AG04449 (cell line): ENCODE measurements at regions of chr22 and their contacts with region 1.

Region 1: GRCh38 chr22:39520054-39520891 is at the start of gene ATF4:
- DNase-seq: peak; percentile 98
- H3K4me3 ChIP-seq: peak within 1 kb of the TSS; percentile 94
- CTCF ChIP-seq: no peak

Region 2: DNA sequence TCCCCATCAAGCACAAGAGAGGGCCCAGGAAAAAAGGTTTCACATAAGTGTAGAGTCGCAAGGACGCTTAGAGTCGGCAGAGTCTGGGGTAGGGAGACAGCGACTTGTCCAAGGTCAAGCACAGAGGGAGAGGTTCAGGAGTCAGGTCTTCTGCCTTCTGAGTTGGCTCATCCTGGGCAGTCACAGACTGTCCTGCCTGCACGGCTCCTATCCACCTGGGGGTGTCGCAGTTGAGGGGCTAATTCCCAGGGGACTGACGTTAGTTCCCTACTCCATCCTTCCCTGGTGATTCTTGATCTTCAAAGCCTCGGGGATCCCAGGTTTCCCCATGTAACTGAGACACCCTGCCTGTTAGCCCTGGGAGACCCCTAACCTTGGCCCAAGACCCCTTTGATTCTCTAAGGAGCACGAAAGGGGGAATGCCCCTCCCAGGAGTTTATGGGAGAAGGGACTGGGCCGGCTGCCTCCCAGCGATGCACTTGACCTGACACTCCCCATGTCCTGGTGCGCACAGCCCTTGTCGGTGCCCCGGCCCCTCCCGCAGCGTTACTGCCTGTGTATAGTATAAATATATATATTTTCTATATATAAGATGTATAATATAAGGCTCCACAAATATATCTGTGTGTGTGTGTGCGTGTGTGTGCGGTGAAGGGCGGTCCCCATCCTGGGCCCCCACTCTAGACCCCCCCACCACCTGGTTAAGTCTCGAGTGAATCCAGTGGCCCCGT is 135.4 kb before region 1 on chr22:
- CTCF ChIA-PET with region 1: no interaction called
- POLR2A ChIA-PET with region 1: no interaction called
- DNase-seq: no peak
- H3K4me3 ChIP-seq: no peak overlapping the region
- CTCF ChIP-seq: peak; percentile 19

Region 3: DNA sequence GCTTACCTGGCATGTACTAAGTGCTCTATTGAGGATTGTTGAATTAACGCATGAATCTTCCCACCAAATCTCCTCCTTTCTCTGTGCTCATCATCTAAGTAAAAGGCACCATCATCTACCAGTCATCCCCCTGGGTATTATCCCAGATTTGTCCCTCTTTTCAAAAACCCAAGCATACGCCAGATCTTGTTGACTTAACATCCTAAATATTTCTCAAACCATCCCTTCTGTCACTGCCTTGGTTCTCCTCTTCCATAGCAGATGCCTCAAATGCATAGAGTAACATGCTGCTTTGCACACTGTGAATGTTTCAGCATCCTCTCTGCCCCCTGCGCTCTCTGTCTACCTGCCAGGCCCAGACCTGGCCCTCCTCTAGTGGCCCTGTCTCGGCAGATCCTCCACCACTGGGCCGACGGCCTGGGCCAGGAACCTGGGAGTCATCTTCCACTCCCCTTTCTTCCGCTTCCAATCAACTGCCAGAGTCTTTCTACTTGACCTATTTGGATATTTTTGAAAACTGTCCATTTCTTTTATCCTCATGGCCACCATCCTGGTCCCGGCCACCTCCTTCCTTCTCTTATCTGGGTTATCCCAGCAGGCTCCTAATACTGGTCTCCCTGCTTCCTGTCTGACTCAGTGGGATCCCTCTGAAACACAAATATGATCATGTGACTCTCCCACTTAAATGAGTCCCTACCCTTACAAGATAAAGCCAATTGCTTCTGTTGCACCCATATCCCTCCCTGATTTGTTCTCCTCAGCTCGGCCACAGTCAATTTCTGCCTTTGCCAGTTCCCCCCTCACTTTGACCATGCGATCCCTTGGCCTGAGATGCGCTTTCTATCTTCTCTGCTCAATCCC is 124.1 kb before region 1 on chr22:
- CTCF ChIA-PET with region 1: interaction called, 15 read pairs
- POLR2A ChIA-PET with region 1: interaction called, 10 read pairs
- DNase-seq: no peak
- H3K4me3 ChIP-seq: no peak overlapping the region
- CTCF ChIP-seq: no peak

Region 4: GRCh38 chr22:39502109-39502788 is 18.0 kb before region 1 on chr22 and contains the start of gene MIEF1:
- CTCF ChIA-PET with region 1: interaction called, 222 read pairs
- POLR2A ChIA-PET with region 1: interaction called, 16 read pairs
- DNase-seq: peak; percentile 63
- H3K4me3 ChIP-seq: peak within 1 kb of the TSS; percentile 75
- CTCF ChIP-seq: peak; percentile 18

Region 5: DNA sequence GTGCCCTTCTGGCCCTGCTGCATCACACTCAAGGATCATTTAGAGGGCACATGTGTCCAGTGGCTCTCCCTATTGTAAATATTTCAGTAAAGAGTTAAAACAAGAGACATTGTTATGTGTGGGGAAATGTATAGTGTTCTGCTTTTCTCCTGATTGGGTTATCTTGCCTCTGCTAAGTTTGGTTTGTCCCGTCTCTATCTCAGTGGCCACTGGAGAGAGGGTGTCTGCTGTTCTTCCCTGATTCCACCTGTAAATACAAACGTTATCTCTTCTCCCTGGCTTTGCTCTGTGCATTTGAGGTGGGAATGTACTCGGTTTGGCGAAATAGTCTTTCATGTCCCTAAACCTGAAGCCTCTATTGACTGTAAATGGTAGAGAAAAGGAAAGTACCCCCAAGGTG is 11.9 kb before region 1 on chr22:
- CTCF ChIA-PET with region 1: interaction called, 172 read pairs
- POLR2A ChIA-PET with region 1: interaction called, 4 read pairs
- DNase-seq: no peak
- H3K4me3 ChIP-seq: no peak overlapping the region
- CTCF ChIP-seq: no peak

Region 6: DNA sequence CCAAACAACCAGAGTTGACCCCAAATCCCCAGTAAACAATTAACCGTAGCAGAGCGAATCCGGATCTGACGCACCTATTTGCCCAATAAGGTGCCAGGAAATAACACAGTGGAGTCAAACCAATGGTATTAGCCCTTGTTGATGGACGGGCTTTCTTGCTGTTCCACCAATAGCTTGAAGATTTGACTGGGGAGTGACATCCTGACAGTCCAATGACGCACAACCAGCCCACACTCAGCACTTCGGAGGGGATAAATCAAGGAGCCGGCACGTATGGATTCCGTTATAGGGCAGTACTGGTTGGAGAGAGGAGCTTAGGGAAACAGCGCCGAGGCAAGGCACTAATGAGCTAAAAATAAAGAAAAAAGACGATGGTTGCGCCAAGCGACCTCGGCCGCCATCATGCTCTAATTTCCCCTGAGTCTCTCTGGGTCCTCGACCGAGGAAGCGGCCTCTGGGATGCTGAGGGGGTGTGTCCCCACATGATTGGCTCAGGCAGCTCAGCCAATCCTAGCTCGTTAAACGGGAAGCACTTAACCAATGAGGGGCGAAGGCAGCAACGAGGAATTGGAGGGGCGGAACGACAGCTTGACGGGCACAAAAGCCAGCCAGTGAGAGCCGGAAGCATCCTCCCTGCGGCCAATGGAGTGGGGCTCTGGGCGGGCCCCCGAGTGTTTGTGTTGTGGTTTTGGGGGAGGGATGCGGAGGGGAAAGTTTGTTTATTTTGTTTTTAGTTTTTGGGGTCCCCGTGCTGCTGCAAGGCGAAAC is 524.0 kb after region 1 on chr22:
- CTCF ChIA-PET with region 1: no interaction called
- POLR2A ChIA-PET with region 1: interaction called, 10 read pairs
- DNase-seq: peak; percentile 96
- H3K4me3 ChIP-seq: peak overlapping the region; percentile 95
- CTCF ChIP-seq: no peak